OCI-LY7 (cell line): ENCODE measurements at regions of chr7 and their contacts with region 1.

Region 1: GRCh38 chr7:66167773-66168387 is 37.3 kb upstream of the TPST1 start:
- DNase-seq: no peak
- H3K4me3 ChIP-seq: no peak overlapping the region
- H3K27ac ChIP-seq: no peak overlapping the region
- H3K4me1 ChIP-seq: no peaks in the 10 kb centered on the region
- CTCF ChIP-seq: no peak

Region 2: GRCh38 chr7:66213637-66214036 is 45.8 kb after region 1 on chr7:
- CTCF ChIA-PET with region 1: no interaction called
- POLR2A ChIA-PET with region 1: interaction called, 12 read pairs
- intact Hi-C with region 1: no loop called
- DNase-seq: no peak
- H3K4me3 ChIP-seq: no peak overlapping the region
- H3K27ac ChIP-seq: no peak overlapping the region
- H3K4me1 ChIP-seq: no peaks in the 10 kb centered on the region
- CTCF ChIP-seq: no peak